Uterus (tissue), 4 donors: ENCODE measurements at regions of chr13 and their contacts with region 1.

Region 1: DNA sequence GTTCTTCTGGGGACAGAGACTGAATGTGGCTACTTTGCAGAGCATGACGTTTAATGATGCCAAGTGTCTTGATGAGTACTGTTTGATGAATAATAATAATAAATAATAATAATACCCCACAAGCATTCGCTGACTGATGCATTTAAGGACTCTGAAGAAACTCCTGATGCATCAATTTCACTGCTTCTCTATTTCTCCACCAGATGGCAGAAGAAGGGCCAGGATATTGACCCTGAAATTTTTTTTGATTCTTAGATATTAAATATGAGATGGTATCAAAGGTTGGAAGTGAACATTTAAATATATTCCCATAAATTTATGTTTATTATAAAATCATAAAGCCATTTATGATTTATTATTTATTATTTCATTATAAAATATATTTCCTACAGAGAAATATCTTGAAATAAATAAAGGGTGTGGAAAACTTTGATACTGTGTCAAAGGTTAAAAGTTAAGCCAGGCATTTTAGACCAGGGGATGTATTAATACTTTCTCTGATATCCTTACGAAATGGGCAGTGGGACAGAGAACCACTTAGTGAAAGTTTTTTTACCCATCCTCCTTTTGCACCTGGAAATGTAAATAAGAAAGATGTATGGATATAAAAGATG is 170.9 kb downstream of the LACC1 start:
- DNase-seq: no peak
- H3K4me3 ChIP-seq: no peak overlapping the region
- H3K27ac ChIP-seq: peak overlapping the region in 1 of 2 donors; percentile 8
- H3K4me1 ChIP-seq: peaks cover 0 to 13% of the 10 kb centered on the region in 2 donors
- H3K27me3 ChIP-seq: no peaks in the 10 kb centered on the region
- CTCF ChIP-seq: peak; percentile 70 to 82 (median 76)
- POLR2A ChIP-seq: no peak

Region 2: DNA sequence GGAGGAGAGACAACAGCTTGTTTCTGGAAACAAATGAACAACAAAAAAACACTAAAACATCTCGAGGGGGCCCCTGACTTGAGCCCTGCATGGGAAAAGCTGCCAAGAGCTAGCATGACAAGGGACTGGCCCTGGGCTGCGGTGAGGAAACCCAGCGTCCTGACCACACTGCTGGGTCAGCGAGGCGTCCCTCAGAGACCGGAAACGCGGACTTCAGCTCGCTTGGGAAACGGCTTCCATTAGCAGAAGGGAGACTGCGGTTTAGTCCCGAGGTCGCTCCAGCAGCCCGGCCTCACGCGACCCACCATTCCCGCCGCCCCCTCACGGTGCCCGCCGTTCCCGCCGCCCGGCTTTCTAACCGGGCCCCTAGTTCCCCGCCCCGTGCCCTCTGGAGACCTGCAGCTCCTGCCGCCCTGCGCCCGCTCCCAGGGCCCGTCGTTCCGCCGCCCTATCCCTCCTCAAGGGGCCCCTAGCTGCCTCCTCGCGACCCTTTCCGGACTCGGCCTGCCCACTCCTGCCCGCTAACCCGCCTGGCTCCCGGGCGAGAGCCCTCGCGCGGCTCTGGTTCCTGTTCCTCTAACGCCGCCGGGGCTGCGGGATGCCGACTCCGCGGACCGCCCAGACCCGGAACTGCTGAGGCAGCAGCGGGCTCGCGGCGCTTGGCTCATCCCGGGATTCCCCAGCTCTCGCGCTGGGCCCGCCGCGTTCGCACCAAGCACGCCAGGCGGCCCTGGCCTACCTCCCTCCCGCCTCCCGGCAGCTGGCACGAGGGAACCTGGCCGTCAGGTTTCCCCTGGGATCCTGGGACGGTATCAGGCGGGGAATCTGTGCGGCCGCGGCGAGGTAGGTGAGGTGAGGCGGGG is 171.4 kb before region 1 on chr13 and contains the start of gene CCDC122:
- intact Hi-C with region 1: no loop called
- DNase-seq: peak; percentile 76 to 78
- H3K4me3 ChIP-seq: peak within 1 kb of the TSS; percentile 76 to 91
- H3K27ac ChIP-seq: peak within 1 kb of the TSS; percentile 91 to 95
- H3K4me1 ChIP-seq: no peaks in the 10 kb centered on the region
- H3K27me3 ChIP-seq: no peaks in the 10 kb centered on the region
- CTCF ChIP-seq: peak in 1 of 4 experiments; percentile 4
- POLR2A ChIP-seq: peak in 1 of 2 donors; percentile 72
- total RNA-seq, gene CCDC122: 3.5 to 18.0 (median 5.8) TPM

Region 3: GRCh38 chr13:44218501-44219240 is 168.1 kb after region 1 on chr13:
- intact Hi-C with region 1: loop called (anchors 10 kb)
- DNase-seq: peak in 1 of 2 donors; percentile 59
- H3K4me3 ChIP-seq: no peak overlapping the region
- H3K27ac ChIP-seq: peak overlapping the region; percentile 80 to 98
- H3K4me1 ChIP-seq: peaks cover 0 to 27% of the 10 kb centered on the region in 2 donors
- H3K27me3 ChIP-seq: no peaks in the 10 kb centered on the region
- CTCF ChIP-seq: no peak
- POLR2A ChIP-seq: no peak

Region 4: GRCh38 chr13:44719857-44720671 is 669.5 kb after region 1 on chr13:
- intact Hi-C with region 1: no loop called
- DNase-seq: no peak
- H3K4me3 ChIP-seq: no peak overlapping the region
- H3K27ac ChIP-seq: peak overlapping the region; percentile 17 to 41
- H3K4me1 ChIP-seq: no peaks in the 10 kb centered on the region
- H3K27me3 ChIP-seq: no peaks in the 10 kb centered on the region
- CTCF ChIP-seq: no peak
- POLR2A ChIP-seq: no peak